Colonic mucosa (tissue), 4 donors: ENCODE measurements at regions of chr6 and their contacts with region 1.

Region 1: GRCh38 chr6:41591859-41592502 is 45.8 kb downstream of the FOXP4 start:
- DNase-seq: peak; percentile 84
- H3K4me3 ChIP-seq: no peak overlapping the region
- H3K27ac ChIP-seq: no peak overlapping the region
- H3K4me1 ChIP-seq: no peaks in the 10 kb centered on the region
- H3K27me3 ChIP-seq: no peaks in the 10 kb centered on the region
- CTCF ChIP-seq: peak; percentile 91

Region 2: DNA sequence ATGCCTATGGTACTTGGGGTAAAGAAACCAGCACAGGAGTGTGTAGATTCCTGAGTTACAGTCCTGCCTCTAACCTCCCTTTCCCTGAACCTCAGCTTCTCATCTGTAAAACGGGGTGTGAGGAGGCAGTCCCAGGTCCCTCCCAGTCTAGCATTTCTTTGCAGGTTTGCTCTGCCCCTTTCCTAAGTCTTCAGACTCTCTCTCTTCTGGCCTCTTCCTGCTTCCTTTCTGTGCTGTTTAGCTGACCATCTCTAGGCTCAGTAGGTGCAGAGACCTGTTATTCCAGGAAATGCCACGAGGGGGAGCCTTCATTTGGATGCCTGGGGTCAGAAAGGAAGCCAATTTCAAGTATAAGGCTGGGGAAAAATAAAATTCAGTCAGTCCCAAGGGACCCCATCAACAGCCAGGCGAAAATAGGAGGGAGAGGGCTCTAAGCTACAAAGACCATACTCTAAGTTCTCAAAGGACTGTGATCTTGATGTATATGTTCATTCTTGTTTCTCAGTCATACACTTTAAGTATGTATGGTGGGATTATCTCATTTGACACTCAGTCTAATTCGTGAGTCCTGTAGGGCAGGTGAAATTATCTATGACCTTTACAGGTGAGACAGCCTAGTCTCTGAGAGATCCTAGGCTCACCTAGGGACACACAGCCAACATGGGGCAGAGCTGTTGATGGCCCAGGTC is 167.5 kb before region 1 on chr6:
- intact Hi-C with region 1: loop called (anchors 2 kb)
- DNase-seq: peak; percentile 92
- H3K4me3 ChIP-seq: no peak overlapping the region
- H3K27ac ChIP-seq: no peak overlapping the region
- H3K4me1 ChIP-seq: peaks cover 8% of the 10 kb centered on the region
- H3K27me3 ChIP-seq: peaks cover 14% of the 10 kb centered on the region
- CTCF ChIP-seq: peak; percentile 84

Region 3: DNA sequence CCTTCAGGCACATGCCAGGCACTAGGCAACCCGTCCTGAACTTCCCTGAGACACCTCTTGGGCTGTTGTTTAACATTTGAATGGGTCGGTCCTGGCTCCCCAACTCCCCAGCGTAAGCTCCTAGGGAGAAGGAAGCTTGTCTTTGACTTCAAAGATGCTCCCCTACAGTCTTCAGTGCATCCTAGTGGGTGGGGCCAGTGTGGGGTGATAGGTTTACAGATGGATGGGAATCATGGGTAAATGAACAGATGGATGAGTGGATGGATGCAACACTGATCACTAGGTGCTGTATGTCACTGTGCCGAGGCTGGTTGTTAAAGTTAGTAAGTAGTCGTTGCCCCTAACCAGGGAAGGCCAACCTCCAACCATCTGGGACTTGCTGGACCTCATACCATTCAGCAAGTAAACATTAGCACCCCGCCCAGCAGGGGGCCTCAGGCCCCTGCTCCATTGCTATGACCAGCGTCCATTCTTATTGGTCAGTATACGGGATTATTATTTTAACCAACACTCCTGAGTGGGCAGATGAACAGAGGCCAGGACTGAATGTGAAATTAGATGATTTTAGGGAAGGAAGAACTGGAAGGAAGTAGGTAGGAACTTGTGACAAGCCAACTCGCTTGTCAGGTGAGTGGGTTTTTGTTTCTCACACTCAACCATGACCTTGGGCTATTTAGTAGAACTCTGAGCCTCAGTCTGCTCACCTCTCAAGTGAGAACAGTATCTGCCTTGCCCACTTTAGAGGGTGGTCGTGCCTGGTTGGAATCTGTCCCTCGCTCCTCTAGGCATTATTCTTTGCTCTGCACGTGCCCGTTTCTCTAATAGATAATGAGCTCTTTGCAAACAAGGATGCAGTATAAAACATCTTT is 128.7 kb before region 1 on chr6:
- intact Hi-C with region 1: loop called (anchors 5 kb)
- DNase-seq: peak; percentile 66
- H3K4me3 ChIP-seq: no peak overlapping the region
- H3K27ac ChIP-seq: no peak overlapping the region
- H3K4me1 ChIP-seq: no peaks in the 10 kb centered on the region
- H3K27me3 ChIP-seq: no peaks in the 10 kb centered on the region
- CTCF ChIP-seq: peak; percentile 55